ENCODE measurements at regions of chr17 and their contacts with region 1.

Region 1: GRCh38 chr17:50087246-50087911 is 7.8 kb upstream of the PDK2 start:
- DNase-seq: peak; percentile 82
- H3K4me3 ChIP-seq: no peak overlapping the region
- H3K27ac ChIP-seq: no peak overlapping the region
- H3K4me1 ChIP-seq: no peaks in the 10 kb centered on the region
- H3K27me3 ChIP-seq: no peaks in the 10 kb centered on the region
- CTCF ChIP-seq: peak; percentile 97

Region 2: GRCh38 chr17:49851387-49852291 is 235.7 kb before region 1 on chr17:
- CTCF ChIA-PET with region 1: no interaction called
- POLR2A ChIA-PET with region 1: no interaction called
- intact Hi-C with region 1: loop called (anchors 10 kb)
- DNase-seq: peak; percentile 86
- H3K4me3 ChIP-seq: peak overlapping the region; percentile 53
- H3K27ac ChIP-seq: no peak overlapping the region
- H3K4me1 ChIP-seq: no peaks in the 10 kb centered on the region
- H3K27me3 ChIP-seq: no peaks in the 10 kb centered on the region
- CTCF ChIP-seq: peak; percentile 91

Region 3: GRCh38 chr17:50026901-50027630 is 60.3 kb before region 1 on chr17:
- CTCF ChIA-PET with region 1: interaction called, 17 read pairs
- POLR2A ChIA-PET with region 1: no interaction called
- intact Hi-C with region 1: loop called (anchors 1 kb)
- DNase-seq: peak; percentile 67
- H3K4me3 ChIP-seq: no peak overlapping the region
- H3K27ac ChIP-seq: no peak overlapping the region
- H3K4me1 ChIP-seq: peaks cover 8% of the 10 kb centered on the region
- H3K27me3 ChIP-seq: no peaks in the 10 kb centered on the region
- CTCF ChIP-seq: peak; percentile 95

Region 4: GRCh38 chr17:50501054-50501453 is 413.7 kb after region 1 on chr17:
- CTCF ChIA-PET with region 1: no interaction called
- POLR2A ChIA-PET with region 1: no interaction called
- intact Hi-C with region 1: no loop called
- DNase-seq: peak; percentile 40
- H3K4me3 ChIP-seq: no peak overlapping the region
- H3K27ac ChIP-seq: no peak overlapping the region
- H3K4me1 ChIP-seq: no peaks in the 10 kb centered on the region
- H3K27me3 ChIP-seq: no peaks in the 10 kb centered on the region
- CTCF ChIP-seq: peak; percentile 60

Measured in A673 (cell line).